CD14-positive monocyte (primary cell): ENCODE measurements at regions of chr4 and their contacts with region 1.

Region 1: GRCh38 chr4:52712172-52712990 is 38.8 kb downstream of the ERVMER34-1 start:
- DNase-seq: peak; percentile 88 to 89 (median 88)
- H3K4me3 ChIP-seq: peak overlapping the region; percentile 61 to 78 (median 71)
- H3K4me3 Mint-ChIP-seq: peak overlapping the region; percentile 83 to 89
- H3K27ac ChIP-seq: peak overlapping the region in 1 of 2 donors; percentile 71
- H3K27ac Mint-ChIP-seq: peak overlapping the region in 5 of 7 donors; percentile 39 to 84 (median 78)
- H3K4me1 ChIP-seq: peaks cover 12 to 14% of the 10 kb centered on the region in 2 donors
- H3K4me1 Mint-ChIP-seq: peaks cover 25% of the 10 kb centered on the region
- H3K27me3 ChIP-seq: no peaks in the 10 kb centered on the region
- H3K27me3 Mint-ChIP-seq: peaks cover 1 to 12% (median 5%) of the 10 kb centered on the region in 3 donors
- CTCF ChIP-seq: no peak

Region 2: GRCh38 chr4:52376132-52376704 is 336.2 kb before region 1 on chr4:
- intact Hi-C with region 1: no loop called
- DNase-seq: peak in 1 of 3 donors; percentile 4
- H3K4me3 ChIP-seq: no peak overlapping the region
- H3K4me3 Mint-ChIP-seq: no peak overlapping the region
- H3K27ac ChIP-seq: no peak overlapping the region
- H3K27ac Mint-ChIP-seq: no peak overlapping the region
- H3K4me1 ChIP-seq: no peaks in the 10 kb centered on the region
- H3K4me1 Mint-ChIP-seq: no peaks in the 10 kb centered on the region
- H3K27me3 ChIP-seq: no peaks in the 10 kb centered on the region
- H3K27me3 Mint-ChIP-seq: peaks cover 1 to 6% (median 3%) of the 10 kb centered on the region in 3 donors
- CTCF ChIP-seq: peak; percentile 81

Region 3: DNA sequence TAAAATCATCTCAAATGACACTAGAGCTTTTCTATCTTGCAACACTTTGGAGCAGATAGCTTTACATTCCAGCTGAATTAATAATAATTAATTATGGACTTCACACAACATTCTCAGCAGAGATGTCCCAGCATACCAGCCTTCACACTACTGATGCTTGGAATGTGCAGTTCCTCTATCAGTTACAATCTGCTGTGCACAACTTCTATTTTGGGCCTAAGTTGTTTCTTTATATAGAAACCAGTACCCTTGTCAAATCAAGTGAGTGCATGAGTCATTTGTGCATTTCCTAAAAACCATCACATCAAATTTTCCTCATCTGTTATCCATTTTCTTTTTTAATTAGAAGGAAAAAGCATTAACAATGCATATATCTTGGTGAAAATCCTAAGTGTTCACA is 141.0 kb after region 1 on chr4:
- intact Hi-C with region 1: loop called in 1 of 2 experiments (anchors 10 kb)
- DNase-seq: no peak
- H3K4me3 ChIP-seq: no peak overlapping the region
- H3K4me3 Mint-ChIP-seq: no peak overlapping the region
- H3K27ac ChIP-seq: no peak overlapping the region
- H3K27ac Mint-ChIP-seq: no peak overlapping the region
- H3K4me1 ChIP-seq: peaks cover 0 to 10% of the 10 kb centered on the region in 2 donors
- H3K4me1 Mint-ChIP-seq: peaks cover 11% of the 10 kb centered on the region
- H3K27me3 ChIP-seq: no peaks in the 10 kb centered on the region
- H3K27me3 Mint-ChIP-seq: peaks cover 0 to 4% (median 2%) of the 10 kb centered on the region in 3 donors
- CTCF ChIP-seq: no peak

Region 4: GRCh38 chr4:52861879-52862616 is 149.7 kb after region 1 on chr4 and contains the start of gene RASL11B:
- intact Hi-C with region 1: loop called (anchors 5 to 10 kb)
- DNase-seq: peak; percentile 63 to 72 (median 70)
- H3K4me3 ChIP-seq: peak within 1 kb of the TSS; percentile 35 to 77 (median 43)
- H3K4me3 Mint-ChIP-seq: peak within 1 kb of the TSS; percentile 80 to 90
- H3K27ac ChIP-seq: no peak within 1 kb of the TSS
- H3K27ac Mint-ChIP-seq: peak within 1 kb of the TSS in 2 of 7 donors; percentile 35 to 78
- H3K4me1 ChIP-seq: peaks cover 11 to 14% of the 10 kb centered on the region in 2 donors
- H3K4me1 Mint-ChIP-seq: peaks cover 6% of the 10 kb centered on the region
- H3K27me3 ChIP-seq: peaks cover 29 to 38% of the 10 kb centered on the region in 2 donors
- H3K27me3 Mint-ChIP-seq: peaks cover 32 to 35% (median 35%) of the 10 kb centered on the region in 3 donors
- CTCF ChIP-seq: peak; percentile 41
- polyA plus RNA-seq, gene RASL11B: not detected

Region 5: DNA sequence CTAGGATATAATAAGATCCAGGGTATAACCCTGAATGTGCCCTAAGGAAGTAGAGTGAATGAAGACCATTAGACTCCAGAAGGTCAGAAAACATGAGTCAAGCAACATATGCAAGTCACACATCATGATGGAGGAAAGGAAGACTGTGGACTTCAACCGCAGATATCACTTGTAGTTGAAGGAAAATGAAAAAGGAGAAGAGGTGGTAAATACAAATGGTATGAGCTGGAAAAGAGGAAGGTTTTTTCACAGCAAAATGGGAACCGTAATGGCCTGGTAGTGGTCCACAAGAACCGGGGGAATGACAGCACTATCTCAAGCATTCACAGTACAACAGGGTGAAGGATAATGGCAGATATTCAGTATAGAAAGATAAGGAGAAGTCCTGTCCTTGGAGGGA is 658.7 kb after region 1 on chr4:
- intact Hi-C with region 1: loop called in 1 of 2 experiments (anchors 5 kb)
- DNase-seq: peak in 2 of 3 donors; percentile 4 to 17
- H3K4me3 ChIP-seq: no peak overlapping the region
- H3K4me3 Mint-ChIP-seq: no peak overlapping the region
- H3K27ac ChIP-seq: no peak overlapping the region
- H3K27ac Mint-ChIP-seq: peak overlapping the region in 1 of 7 donors; percentile 3
- H3K4me1 ChIP-seq: peaks cover 5 to 8% of the 10 kb centered on the region in 2 donors
- H3K4me1 Mint-ChIP-seq: peaks cover 11% of the 10 kb centered on the region
- H3K27me3 ChIP-seq: no peaks in the 10 kb centered on the region
- H3K27me3 Mint-ChIP-seq: peaks cover 6 to 9% (median 7%) of the 10 kb centered on the region in 3 donors
- CTCF ChIP-seq: no peak

Region 6: DNA sequence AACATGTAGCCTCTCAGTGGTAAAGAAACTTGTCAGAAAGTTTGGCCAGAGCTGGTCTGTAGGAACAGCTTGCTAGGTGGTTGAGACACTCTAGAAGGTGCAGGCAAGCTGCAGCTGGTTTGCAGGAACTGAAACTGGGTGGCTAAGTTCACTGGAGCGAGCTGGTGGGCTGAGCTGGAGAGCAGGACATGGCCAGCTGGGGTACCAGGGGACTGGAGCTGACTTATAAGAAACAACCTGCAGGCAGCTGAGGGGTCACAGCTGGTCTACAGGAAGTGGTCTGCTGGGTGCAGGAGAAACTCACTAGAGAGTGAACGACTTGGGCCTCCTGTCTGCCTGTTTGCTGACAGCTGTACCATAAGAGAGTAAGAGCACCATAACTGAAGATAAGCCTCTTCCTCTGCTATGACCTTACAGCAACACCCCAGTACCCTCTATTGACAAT is 1036.0 kb after region 1 on chr4:
- intact Hi-C with region 1: no loop called
- DNase-seq: peak; percentile 23 to 46 (median 35)
- H3K4me3 ChIP-seq: no peak overlapping the region
- H3K4me3 Mint-ChIP-seq: no peak overlapping the region
- H3K27ac ChIP-seq: peak overlapping the region in 1 of 2 donors; percentile 5
- H3K27ac Mint-ChIP-seq: peak overlapping the region in 1 of 7 donors; percentile 0
- H3K4me1 ChIP-seq: peaks cover 6 to 11% of the 10 kb centered on the region in 2 donors
- H3K4me1 Mint-ChIP-seq: peaks cover 15% of the 10 kb centered on the region
- H3K27me3 ChIP-seq: no peaks in the 10 kb centered on the region
- H3K27me3 Mint-ChIP-seq: peaks cover 0 to 1% (median 0%) of the 10 kb centered on the region in 3 donors
- CTCF ChIP-seq: no peak